ENCODE measurements at regions of chr9 and their contacts with region 1.

Region 1: DNA sequence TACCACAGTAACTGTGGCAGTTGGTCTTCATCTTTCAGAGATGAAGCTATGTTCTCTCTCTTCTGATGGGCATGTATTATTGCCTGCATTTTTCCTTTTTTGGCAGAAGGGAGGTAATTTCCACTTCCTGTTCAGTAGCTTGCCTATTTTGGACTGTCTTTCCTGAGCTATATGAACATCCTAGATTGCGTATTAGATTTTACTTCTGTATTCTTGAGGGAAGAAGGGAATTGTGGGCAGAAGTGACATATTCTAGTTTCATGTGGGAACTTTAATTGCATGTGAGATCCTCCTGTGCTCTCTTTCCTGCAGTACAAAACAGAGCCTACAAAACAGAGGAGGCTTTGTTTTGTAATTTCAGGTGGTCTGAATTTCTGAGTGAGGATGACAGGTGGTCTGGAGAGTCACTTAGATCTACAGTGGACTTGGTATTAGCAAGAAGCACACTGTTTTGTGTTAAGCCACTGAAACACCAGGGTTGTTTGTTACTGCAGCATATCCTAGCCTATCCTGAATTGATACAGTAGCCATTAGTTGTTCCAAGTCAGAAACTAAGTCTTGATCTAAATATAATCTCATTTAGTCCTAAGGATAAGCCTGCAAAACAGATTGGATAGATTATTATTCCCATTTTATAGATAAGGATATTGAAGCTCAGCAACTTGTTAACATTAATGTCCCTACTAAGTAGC is 68.1 kb downstream of the AOPEP start:
- DNase-seq: no peak

Region 2: DNA sequence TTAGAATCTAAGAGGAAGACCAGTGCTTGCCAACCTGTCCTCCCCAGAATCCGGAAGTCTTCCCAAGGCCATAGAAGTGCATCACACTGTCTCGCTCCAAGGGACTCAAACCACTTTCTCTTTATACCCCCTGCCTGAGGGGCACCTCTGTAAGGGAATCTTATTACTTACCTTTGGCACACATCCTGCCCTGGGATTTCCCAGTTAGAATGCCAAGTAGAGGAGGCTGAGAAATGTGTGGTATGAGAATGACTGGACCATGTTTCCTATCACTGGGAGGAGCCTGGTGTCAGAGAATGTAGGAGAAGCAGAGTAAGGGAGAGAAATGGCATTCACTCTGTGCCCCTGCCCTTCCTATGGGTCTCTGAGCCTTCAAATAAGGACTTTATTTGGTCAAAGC is 17.7 kb after region 1 on chr9:
- intact Hi-C with region 1: loop called in 1 of 2 experiments (anchors 1 kb)
- DNase-seq: no peak

Region 3: DNA sequence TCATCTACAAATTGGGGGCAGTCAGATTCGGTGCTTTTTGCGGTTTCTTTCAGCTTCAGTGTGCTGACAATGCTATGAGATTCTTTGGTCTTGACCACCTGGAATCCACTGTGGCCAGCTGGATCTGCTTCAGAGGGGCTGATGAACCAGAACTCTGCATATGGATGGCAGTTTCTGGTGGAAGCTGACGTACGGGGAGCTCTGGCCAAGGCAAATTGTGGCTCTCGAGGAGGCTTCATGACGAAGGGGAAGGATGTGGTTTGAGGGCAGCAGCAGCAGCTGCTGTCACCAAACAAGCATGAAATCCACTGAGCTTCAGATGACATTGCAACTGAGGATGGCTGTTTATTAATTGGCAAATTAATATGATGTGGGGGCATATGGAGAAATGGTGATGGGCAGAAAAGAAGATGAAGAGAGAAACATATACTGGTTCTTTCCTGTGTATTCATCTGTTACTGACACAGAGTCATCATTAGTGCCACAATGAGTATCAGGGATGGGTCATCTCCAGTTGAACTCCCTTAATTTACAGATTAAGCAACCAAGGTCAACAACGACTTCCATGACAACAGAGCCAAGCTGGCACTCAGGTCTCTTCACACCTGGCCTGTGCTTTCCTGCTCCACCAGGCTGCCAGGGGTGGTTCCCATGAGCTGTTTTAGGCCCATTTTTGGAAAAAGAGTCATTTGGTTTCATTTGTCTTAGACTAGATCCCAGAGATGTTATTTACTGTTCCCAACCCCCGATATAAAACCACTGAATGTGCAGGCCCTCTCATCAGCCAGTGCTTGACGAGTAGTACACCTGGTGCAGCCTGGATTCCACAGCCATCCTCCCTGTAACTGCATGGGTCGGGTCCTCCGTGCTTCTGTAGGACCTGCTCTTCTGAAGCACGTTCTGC is 66.6 kb after region 1 on chr9:
- intact Hi-C with region 1: no loop called
- DNase-seq: no peak

Measured in posterior vena cava (tissue), 2 donors.